ENCODE measurements at regions of chr18 and their contacts with region 1.

Region 1: DNA sequence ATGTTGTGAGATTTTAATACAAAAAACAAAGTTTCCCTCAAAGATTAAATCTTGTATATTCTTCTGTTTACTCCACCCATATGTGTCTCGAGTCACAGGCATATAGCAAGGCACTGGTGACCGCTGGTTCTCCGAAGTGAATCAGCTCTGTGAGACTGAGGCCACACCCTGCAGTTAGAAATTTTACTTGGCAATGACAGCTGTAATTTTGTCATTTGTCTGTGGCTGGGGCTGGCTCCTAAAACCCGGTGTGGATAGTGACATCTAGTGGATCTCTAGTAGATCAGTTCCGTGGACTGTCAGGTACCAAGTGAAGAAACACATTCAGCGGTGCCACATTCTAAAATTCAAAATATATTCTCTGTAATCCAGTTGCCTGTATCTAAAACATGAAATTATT is 278.0 kb downstream of the NEDD4L start:
- DNase-seq: no peak
- H3K4me3 ChIP-seq: no peak overlapping the region
- CTCF ChIP-seq: peak; percentile 50

Region 2: DNA sequence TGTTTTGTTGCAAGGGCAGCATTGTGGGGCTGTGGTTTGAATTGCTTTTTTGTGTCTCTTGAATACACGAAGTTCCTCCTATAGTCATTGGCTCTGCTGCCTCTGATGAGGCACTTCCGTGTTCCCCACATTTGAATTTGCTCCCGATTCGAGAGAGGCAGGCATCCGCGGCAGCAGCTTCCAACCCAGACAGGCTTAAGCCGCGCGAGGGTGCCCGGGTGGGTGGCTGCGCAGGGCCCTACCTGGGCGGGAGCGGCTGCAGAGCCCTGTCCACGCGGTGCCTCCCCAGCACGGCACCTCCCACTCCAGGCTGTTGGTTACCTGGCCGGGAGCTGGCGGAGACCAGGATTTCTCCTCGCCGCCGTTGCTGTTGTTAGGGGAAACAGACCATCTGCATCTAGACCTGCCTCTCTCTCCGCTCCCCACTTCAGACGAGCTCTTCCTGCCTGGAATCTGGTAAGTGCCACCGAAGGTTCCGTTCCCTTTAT is 126.7 kb before region 1 on chr18:
- CTCF ChIA-PET with region 1: interaction called, 12 read pairs
- POLR2A ChIA-PET with region 1: no interaction called
- DNase-seq: no peak
- H3K4me3 ChIP-seq: peak overlapping the region; percentile 46
- CTCF ChIP-seq: no peak

Region 3: DNA sequence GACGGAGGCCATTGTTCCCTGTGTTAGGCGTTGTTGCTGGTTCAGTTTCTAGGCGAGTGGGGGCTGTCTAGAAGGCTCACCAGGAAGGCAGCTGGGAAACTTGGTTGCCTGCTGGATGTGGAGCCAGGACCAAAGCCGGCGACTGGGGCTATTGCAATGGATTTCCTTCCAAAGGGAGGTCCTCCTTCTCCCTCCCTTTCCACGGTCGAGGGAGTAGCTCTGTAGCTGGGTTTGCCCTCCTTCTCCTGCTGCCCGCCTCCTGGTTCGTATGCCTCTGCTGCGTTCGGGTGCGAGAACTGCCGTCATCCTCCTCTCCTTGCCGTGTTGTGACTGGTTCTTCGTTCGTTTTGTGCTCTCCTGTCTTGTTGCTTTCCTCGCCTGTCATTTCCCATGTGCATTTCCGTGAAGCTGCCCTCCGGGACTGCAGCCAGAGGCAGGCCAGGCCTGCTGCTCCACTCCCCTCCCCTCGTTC is 74.6 kb before region 1 on chr18:
- CTCF ChIA-PET with region 1: no interaction called
- POLR2A ChIA-PET with region 1: no interaction called
- DNase-seq: no peak
- H3K4me3 ChIP-seq: no peak overlapping the region
- CTCF ChIP-seq: no peak

Region 4: DNA sequence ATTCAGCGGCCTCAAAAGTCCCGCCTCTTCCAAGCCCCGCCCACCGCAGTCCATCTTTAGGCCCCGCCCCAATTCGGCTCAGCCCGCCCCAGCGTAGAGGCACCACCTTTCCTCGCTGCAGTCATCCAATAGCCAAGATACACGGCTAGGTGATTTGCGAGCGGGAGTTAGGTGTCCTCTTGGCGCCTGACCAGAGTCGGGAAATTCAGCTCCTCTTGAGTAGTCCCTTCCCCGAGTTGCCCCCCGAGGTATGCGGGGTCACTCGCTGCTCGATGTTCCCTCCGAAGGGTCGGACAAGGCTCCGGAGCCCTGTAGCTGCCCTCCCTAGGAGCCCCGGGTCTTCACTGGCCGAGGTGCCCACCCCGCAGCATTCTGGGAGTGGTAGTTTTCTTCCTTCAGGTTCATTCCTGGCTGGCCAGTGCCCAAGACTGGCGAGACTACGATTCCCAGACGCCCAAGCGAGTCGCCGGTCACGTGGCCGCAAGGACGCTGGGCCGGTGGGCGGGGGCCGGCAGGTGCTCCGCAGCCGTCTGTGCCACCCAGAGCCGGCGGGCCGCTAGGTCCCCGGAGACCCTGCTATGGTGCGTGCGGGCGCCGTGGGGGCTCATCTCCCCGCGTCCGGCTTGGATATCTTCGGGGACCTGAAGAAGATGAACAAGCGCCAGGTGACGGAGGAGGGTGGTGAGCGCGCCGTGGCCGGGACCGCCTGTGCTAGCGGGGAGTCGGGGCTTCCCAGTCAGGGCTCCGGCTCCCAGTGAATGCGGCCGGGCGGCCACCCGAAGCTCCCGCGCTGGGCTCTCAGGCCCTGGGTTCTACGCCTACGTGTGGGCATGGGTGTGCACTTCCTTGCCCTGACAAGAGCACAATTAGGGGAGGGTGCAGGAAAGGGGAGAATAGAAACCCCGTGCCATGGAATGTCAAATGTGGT is 817.6 kb after region 1 on chr18 and contains the start of gene SEC11C:
- CTCF ChIA-PET with region 1: no interaction called
- POLR2A ChIA-PET with region 1: no interaction called
- DNase-seq: peak; percentile 65
- H3K4me3 ChIP-seq: peak within 1 kb of the TSS; percentile 78
- CTCF ChIP-seq: no peak